ENCODE measurements at regions of chr6 and their contacts with region 1.

Region 1: GRCh38 chr6:68967549-68968300 is 332.6 kb downstream of the ADGRB3 start:
- DNase-seq: peak; percentile 12
- ATAC-seq: peak; percentile 80
- H3K4me3 ChIP-seq: no peak overlapping the region
- H3K27ac ChIP-seq: no peak overlapping the region
- H3K4me1 ChIP-seq: no peaks in the 10 kb centered on the region
- H3K27me3 ChIP-seq: no peaks in the 10 kb centered on the region; a peak in 1 of 4 replicates
- CTCF ChIP-seq: peak; percentile 81 to 86 (median 83)
- EP300 ChIP-seq: no peak
- POLR2A ChIP-seq: no peak
- RAD21 ChIP-seq: peak; percentile 70

Region 2: GRCh38 chr6:68343901-68344300 is 623.8 kb before region 1 on chr6:
- CTCF ChIA-PET with region 1: no interaction called
- POLR2A ChIA-PET with region 1: no interaction called
- RAD21 ChIA-PET with region 1: no interaction called
- SMC1A ChIA-PET with region 1: no interaction called
- in situ Hi-C with region 1: no loop called
- intact Hi-C with region 1: loop called (anchors 10 kb)
- DNase-seq: no peak
- ATAC-seq: peak; percentile 94
- H3K4me3 ChIP-seq: no peak overlapping the region
- H3K27ac ChIP-seq: no peak overlapping the region
- H3K4me1 ChIP-seq: no peaks in the 10 kb centered on the region
- H3K27me3 ChIP-seq: no peaks in the 10 kb centered on the region
- CTCF ChIP-seq: peak; percentile 42 to 59 (median 57); a peak in 4 of 6 replicates
- EP300 ChIP-seq: no peak
- POLR2A ChIP-seq: no peak
- RAD21 ChIP-seq: peak; percentile 51; the same call in 1 of the 2 replicates

Region 3: DNA sequence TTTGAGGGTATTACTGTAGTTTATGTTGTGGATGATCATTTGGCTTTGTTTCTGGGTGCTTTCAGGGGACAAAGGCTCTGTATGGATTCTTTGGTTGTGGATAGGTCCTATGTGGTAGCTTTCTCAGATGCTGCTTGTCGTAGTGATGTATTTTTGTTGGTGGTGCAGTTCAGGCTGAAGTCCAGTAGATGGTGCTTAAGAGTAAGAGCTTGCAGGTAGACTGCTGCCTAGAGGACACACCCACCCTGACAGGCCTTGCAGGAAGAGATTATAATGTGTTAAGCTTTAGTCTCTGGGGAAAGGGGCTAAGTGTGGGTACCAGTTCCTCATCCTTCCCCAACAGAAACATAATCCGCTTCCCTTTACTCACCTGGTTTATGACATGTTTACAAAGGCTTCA is 395.2 kb before region 1 on chr6:
- CTCF ChIA-PET with region 1: interaction called, 7 read pairs
- POLR2A ChIA-PET with region 1: no interaction called
- RAD21 ChIA-PET with region 1: interaction called, 3 read pairs
- SMC1A ChIA-PET with region 1: no interaction called
- in situ Hi-C with region 1: no loop called
- intact Hi-C with region 1: loop called (anchors 2 kb)
- DNase-seq: peak; percentile 3
- ATAC-seq: peak; percentile 97
- H3K4me3 ChIP-seq: no peak overlapping the region
- H3K27ac ChIP-seq: no peak overlapping the region
- H3K4me1 ChIP-seq: no peaks in the 10 kb centered on the region
- H3K27me3 ChIP-seq: no peaks in the 10 kb centered on the region
- CTCF ChIP-seq: peak; percentile 49 to 62 (median 52)
- EP300 ChIP-seq: no peak
- POLR2A ChIP-seq: no peak
- RAD21 ChIP-seq: peak; percentile 49

Region 4: GRCh38 chr6:68634726-68635411 is 332.9 kb before region 1 on chr6 and contains the start of gene ADGRB3:
- CTCF ChIA-PET with region 1: interaction called, 4 read pairs
- POLR2A ChIA-PET with region 1: no interaction called
- RAD21 ChIA-PET with region 1: no interaction called
- SMC1A ChIA-PET with region 1: interaction called, 5 read pairs
- in situ Hi-C with region 1: loop called (anchors 10 kb)
- intact Hi-C with region 1: loop called (anchors 1 kb)
- DNase-seq: no peak
- ATAC-seq: peak; percentile 75
- H3K4me3 ChIP-seq: peak within 1 kb of the TSS; percentile 67
- H3K27ac ChIP-seq: no peak within 1 kb of the TSS
- H3K4me1 ChIP-seq: no peaks in the 10 kb centered on the region
- H3K27me3 ChIP-seq: peaks cover 1 to 16% of the 10 kb centered on the region in 2 experiments
- CTCF ChIP-seq: no peak
- EP300 ChIP-seq: no peak
- POLR2A ChIP-seq: no peak
- RAD21 ChIP-seq: no peak
- polyA plus RNA-seq, gene ADGRB3: not detected

Region 5: DNA sequence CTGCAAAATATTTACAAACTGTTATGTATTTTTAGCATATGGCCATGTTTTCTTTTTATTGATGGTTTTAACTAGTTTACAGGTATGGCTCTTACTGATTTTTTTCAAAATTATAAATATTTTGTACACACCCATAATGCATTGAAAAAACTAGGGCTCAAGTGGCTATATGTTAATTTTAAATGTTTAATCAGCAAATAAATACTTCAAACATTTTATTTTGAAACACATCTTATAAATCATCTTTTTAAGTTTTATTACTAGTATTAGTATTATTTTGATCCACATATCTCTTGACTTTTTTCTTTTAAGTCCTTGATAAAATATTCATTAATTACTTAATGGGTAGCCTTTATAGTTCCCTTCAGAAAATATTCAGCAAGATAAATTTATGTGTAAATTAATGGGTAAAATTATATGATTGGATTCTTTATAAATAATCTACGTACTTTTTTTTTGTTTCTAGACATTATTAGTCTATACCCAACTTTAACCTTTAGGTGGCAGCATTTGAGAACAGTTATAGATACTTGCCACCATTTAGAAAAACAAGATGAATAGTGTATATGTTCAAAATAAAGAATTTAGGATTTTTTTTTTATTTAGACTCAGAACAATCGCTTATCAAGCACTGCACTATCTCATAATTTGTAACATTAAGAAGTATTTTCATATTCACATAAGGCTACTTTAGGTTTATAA is 90.8 kb before region 1 on chr6:
- CTCF ChIA-PET with region 1: interaction called, 3 read pairs
- POLR2A ChIA-PET with region 1: no interaction called
- RAD21 ChIA-PET with region 1: interaction called, 3 read pairs
- SMC1A ChIA-PET with region 1: interaction called, 3 read pairs
- in situ Hi-C with region 1: no loop called
- intact Hi-C with region 1: loop called (anchors 1 kb)
- DNase-seq: no peak
- ATAC-seq: 0 out of 3 replicates have a peak, but pooled peaks have one; percentile 42
- H3K4me3 ChIP-seq: no peak overlapping the region
- H3K27ac ChIP-seq: no peak overlapping the region
- H3K4me1 ChIP-seq: no peaks in the 10 kb centered on the region
- H3K27me3 ChIP-seq: no peaks in the 10 kb centered on the region
- CTCF ChIP-seq: peak in 2 of 3 experiments; percentile 22 to 24; a peak in 3 of 6 replicates
- EP300 ChIP-seq: no peak
- POLR2A ChIP-seq: no peak
- RAD21 ChIP-seq: peak; percentile 49

Region 6: DNA sequence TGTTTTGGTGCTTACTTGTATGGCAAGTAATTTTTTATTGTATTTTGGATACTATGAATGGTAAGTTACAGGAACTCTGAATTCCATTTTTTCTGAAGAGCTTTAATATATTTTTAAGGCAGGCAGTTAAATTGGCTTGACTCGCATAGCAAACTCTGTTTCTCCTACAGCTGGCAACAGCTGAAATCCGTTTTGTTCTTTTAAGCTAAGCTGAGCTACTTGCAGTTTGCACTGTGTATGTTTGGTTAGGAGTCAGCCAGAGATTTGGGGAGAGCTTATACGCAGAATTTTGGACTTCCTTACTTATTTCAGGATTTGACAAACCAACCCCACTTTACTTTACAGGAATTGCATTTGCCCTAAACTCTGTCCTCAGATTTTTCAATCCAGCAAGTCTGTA is 1077.7 kb after region 1 on chr6:
- CTCF ChIA-PET with region 1: no interaction called
- POLR2A ChIA-PET with region 1: no interaction called
- RAD21 ChIA-PET with region 1: no interaction called
- SMC1A ChIA-PET with region 1: no interaction called
- in situ Hi-C with region 1: no loop called
- intact Hi-C with region 1: no loop called
- DNase-seq: no peak
- ATAC-seq: no peak
- H3K4me3 ChIP-seq: no peak overlapping the region
- H3K27ac ChIP-seq: no peak overlapping the region
- H3K4me1 ChIP-seq: no peaks in the 10 kb centered on the region
- H3K27me3 ChIP-seq: no peaks in the 10 kb centered on the region
- CTCF ChIP-seq: no peak
- EP300 ChIP-seq: no peak
- POLR2A ChIP-seq: no peak
- RAD21 ChIP-seq: no peak

Measured in GM12878 (cell line).